ENCODE measurements at regions of chr12 and their contacts with region 1.

Region 1: GRCh38 chr12:130086248-130086647 is 76.0 kb upstream of the FZD10 start:
- DNase-seq: no peak
- H3K4me3 ChIP-seq: no peak overlapping the region
- H3K27ac ChIP-seq: no peak overlapping the region
- H3K4me1 ChIP-seq: no peaks in the 10 kb centered on the region
- H3K27me3 ChIP-seq: peaks cover 26% of the 10 kb centered on the region
- CTCF ChIP-seq: no peak

Region 2: DNA sequence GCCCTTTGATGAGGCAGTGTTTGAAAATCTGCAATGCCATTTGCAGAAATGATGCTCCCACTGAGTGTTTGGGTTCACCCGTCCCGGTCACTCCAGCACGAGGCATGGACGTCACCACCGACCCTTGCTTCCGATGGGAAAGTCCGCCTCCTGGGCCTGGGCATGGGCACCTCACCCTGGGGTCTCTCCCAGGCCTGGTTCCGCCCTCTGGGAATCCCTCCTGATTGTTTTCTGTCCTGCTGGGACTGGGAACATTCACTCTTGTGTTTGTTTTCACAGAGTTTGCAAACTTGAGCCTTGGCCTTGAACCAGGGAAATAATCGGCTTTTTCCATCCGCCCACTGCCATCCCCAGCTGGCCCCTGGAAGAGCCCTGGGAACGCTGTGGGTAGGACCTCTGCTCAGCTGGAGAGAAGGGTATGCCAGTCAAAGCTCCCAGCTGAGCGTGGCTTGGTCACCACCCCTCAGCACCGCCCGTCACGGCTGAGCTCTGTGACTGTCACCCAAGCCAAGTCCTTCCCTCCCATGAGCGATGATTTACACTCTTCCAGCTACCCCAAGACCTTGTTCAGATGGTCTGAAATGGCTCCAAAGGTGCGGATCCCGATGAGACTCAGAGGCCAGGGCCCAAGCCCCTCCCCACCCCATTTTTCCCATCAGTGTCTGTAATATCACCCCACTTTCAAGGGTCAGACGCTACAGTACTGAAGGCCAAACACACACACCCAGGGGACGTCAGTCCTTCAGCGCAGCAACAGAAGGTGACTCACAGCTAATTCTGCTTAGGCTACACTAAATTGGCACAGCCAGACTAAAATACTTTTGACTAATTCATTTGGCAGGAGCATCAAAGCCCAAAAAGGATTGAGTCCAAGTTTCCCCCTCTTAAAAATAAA is 41.9 kb after region 1 on chr12:
- CTCF ChIA-PET with region 1: no interaction called
- POLR2A ChIA-PET with region 1: no interaction called
- intact Hi-C with region 1: no loop called
- DNase-seq: no peak
- H3K4me3 ChIP-seq: no peak overlapping the region
- H3K27ac ChIP-seq: no peak overlapping the region
- H3K4me1 ChIP-seq: no peaks in the 10 kb centered on the region
- H3K27me3 ChIP-seq: peaks cover 6% of the 10 kb centered on the region
- CTCF ChIP-seq: no peak

Region 3: GRCh38 chr12:130362060-130362459 is 275.8 kb after region 1 on chr12:
- CTCF ChIA-PET with region 1: no interaction called
- POLR2A ChIA-PET with region 1: interaction called, 26 read pairs
- intact Hi-C with region 1: no loop called
- DNase-seq: no peak
- H3K4me3 ChIP-seq: no peak overlapping the region
- H3K27ac ChIP-seq: no peak overlapping the region
- H3K4me1 ChIP-seq: no peaks in the 10 kb centered on the region
- H3K27me3 ChIP-seq: peaks cover 97% of the 10 kb centered on the region
- CTCF ChIP-seq: no peak